ENCODE measurements at regions of chr4 and their contacts with region 1.

Region 1: GRCh38 chr4:145732895-145733880 is 53.2 kb downstream of the C4orf51 start:
- DNase-seq: peak; percentile 93 to 94
- ATAC-seq: peak; percentile 40 to 44
- H3K4me3 ChIP-seq: peak overlapping the region; percentile 62 to 75 (median 70)
- H3K27ac ChIP-seq: peak overlapping the region; percentile 92 to 98 (median 96)
- H3K4me1 ChIP-seq: peaks cover 52 to 58% of the 10 kb centered on the region in 2 donors
- H3K27me3 ChIP-seq: no peaks in the 10 kb centered on the region
- CTCF ChIP-seq: peak in 1 of 5 experiments; percentile 26
- POLR2A ChIP-seq: peak; percentile 84 to 87

Region 2: DNA sequence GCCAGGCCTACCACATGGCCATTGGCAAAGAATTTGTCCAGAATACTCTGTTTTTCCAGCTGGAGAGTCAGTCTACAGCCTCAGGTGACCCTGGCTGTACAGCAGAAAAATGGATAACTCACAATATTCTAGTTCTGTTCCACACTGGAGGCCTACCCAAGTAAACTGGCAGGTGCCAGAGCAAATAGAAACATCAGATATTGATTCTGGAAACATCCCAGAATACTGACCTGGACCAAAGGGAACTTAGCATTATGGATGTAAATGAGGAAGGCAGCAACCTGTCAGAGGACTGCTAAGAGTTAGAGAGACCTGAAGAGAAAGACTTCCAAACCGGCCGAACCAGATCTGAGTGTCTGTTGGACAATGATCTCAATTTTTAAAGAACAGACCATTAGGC is 399.4 kb before region 1 on chr4:
- in situ Hi-C with region 1: no loop called
- intact Hi-C with region 1: no loop called
- DNase-seq: no peak
- ATAC-seq: no peak
- H3K4me3 ChIP-seq: no peak overlapping the region
- H3K27ac ChIP-seq: no peak overlapping the region
- H3K4me1 ChIP-seq: peaks cover 0 to 9% of the 10 kb centered on the region in 2 donors
- H3K27me3 ChIP-seq: no peaks in the 10 kb centered on the region
- CTCF ChIP-seq: no peak
- POLR2A ChIP-seq: no peak

Region 3: DNA sequence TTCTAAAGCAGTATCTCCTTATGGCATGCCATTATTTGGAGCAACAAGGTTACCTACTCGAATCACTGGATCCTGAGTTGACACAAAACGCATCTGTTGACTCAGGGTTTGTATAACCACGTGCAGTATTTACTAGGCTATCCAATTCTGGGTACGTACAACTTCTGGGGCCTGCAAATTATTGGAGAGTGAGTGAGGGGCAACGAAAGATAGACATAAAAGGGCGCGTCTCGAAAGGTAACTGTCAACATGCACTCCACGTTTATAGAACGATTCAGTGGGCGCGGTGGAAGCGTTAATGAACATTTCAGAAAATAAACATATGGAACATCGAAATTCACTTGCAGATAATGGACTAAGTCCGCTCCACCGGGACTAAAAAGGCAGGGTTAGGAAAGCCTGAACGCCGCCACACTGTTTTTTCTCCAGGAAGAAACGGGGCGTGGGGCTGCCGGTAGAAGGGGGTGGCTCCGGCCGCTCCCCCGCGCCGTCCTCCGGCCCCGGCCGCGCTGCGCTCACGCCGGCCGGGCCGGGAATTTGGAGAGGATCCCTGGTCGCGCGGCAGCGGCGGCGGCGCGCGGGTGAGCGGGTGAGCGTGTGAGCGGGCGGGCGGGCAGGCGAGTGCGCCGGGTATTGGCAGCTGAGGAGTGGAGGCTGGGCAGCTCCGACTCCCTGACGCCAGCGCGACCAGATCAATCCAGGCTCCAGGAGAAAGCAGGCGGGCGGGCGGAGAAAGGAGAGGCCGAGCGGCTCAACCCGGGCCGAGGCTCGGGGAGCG is 251.8 kb before region 1 on chr4 and contains the start of gene SMAD1:
- in situ Hi-C with region 1: no loop called
- intact Hi-C with region 1: loop called (anchors 5 kb)
- DNase-seq: peak; percentile 84 to 87
- ATAC-seq: peak; percentile 80 to 85
- H3K4me3 ChIP-seq: peak within 1 kb of the TSS; percentile 68 to 94 (median 77)
- H3K27ac ChIP-seq: peak within 1 kb of the TSS; percentile 91 to 98 (median 94)
- H3K4me1 ChIP-seq: peaks cover 28 to 30% of the 10 kb centered on the region in 2 donors
- H3K27me3 ChIP-seq: no peaks in the 10 kb centered on the region
- CTCF ChIP-seq: peak in 1 of 5 experiments; percentile 5
- POLR2A ChIP-seq: peak; percentile 77 to 84
- total RNA-seq, gene SMAD1: 19.9 to 33.9 (median 21.7) TPM

Region 4: GRCh38 chr4:145679520-145679919 is 53.7 kb before region 1 on chr4:
- in situ Hi-C with region 1: no loop called
- intact Hi-C with region 1: loop called (anchors 2 kb)
- DNase-seq: peak; percentile 80
- ATAC-seq: peak; percentile 97 to 99
- H3K4me3 ChIP-seq: peak overlapping the region in 2 of 4 donors; percentile 31 to 32
- H3K27ac ChIP-seq: peak overlapping the region; percentile 79 to 91 (median 82)
- H3K4me1 ChIP-seq: peaks cover 25 to 36% of the 10 kb centered on the region in 2 donors
- H3K27me3 ChIP-seq: no peaks in the 10 kb centered on the region
- CTCF ChIP-seq: no peak
- POLR2A ChIP-seq: no peak

Region 5: GRCh38 chr4:145791988-145792387 is 58.8 kb after region 1 on chr4:
- in situ Hi-C with region 1: loop called in 1 of 4 experiments (anchors 10 kb)
- intact Hi-C with region 1: loop called (anchors 1 kb)
- DNase-seq: peak; percentile 43 to 55
- ATAC-seq: peak; percentile 95 to 98
- H3K4me3 ChIP-seq: no peak overlapping the region
- H3K27ac ChIP-seq: peak overlapping the region; percentile 82 to 90 (median 86)
- H3K4me1 ChIP-seq: peaks cover 28 to 36% of the 10 kb centered on the region in 2 donors
- H3K27me3 ChIP-seq: no peaks in the 10 kb centered on the region
- CTCF ChIP-seq: no peak
- POLR2A ChIP-seq: no peak

Region 6: DNA sequence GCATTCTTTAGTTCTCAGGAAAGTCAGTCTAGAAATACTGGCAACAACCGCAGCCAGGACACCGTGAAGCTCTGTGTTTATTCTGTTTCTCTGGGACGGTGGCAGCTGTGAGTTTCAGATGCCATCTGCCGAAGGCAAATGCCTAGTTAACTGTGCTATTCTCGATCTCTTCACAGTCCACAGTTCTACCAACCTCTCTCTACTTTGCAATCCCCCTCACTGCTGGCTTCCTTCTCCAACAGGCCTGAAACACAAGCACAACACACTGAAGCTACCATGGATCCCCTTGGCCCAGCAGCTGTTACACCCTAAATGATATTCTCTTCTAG is 86.6 kb after region 1 on chr4:
- in situ Hi-C with region 1: no loop called
- intact Hi-C with region 1: loop called (anchors 1 kb)
- DNase-seq: peak; percentile 44 to 50
- ATAC-seq: peak; percentile 90 to 93
- H3K4me3 ChIP-seq: peak overlapping the region in 3 of 4 donors; percentile 12 to 34 (median 34)
- H3K27ac ChIP-seq: peak overlapping the region; percentile 77 to 87 (median 83)
- H3K4me1 ChIP-seq: peaks cover 30 to 32% of the 10 kb centered on the region in 2 donors
- H3K27me3 ChIP-seq: no peaks in the 10 kb centered on the region
- CTCF ChIP-seq: peak in 1 of 5 experiments; percentile 16
- POLR2A ChIP-seq: no peak

Region 7: GRCh38 chr4:146175541-146176453 is 442.6 kb after region 1 on chr4 and contains the start of gene LSM6:
- in situ Hi-C with region 1: no loop called
- intact Hi-C with region 1: loop called (anchors 10 kb)
- DNase-seq: peak; percentile 76 to 82
- ATAC-seq: peak; percentile 94 to 96
- H3K4me3 ChIP-seq: peak within 1 kb of the TSS; percentile 83 to 90 (median 88)
- H3K27ac ChIP-seq: peak within 1 kb of the TSS; percentile 81 to 93 (median 88)
- H3K4me1 ChIP-seq: peaks cover 35 to 44% of the 10 kb centered on the region in 2 donors
- H3K27me3 ChIP-seq: no peaks in the 10 kb centered on the region
- CTCF ChIP-seq: peak in 2 of 5 experiments; percentile 34 to 40
- POLR2A ChIP-seq: peak; percentile 61 to 69
- total RNA-seq, gene LSM6: 12.7 to 31.0 (median 15.5) TPM